ENCODE measurements at regions of chr11 and their contacts with region 1.

Region 1: GRCh38 chr11:43868852-43869567 is 11.6 kb upstream of the ALKBH3 start:
- DNase-seq: peak; percentile 54
- H3K4me3 Mint-ChIP-seq: no peak overlapping the region
- H3K27ac Mint-ChIP-seq: peak overlapping the region; percentile 15
- H3K4me1 Mint-ChIP-seq: peaks cover 16% of the 10 kb centered on the region
- H3K27me3 Mint-ChIP-seq: peaks cover 49% of the 10 kb centered on the region

Region 2: GRCh38 chr11:43643898-43644620 is 225.0 kb before region 1 on chr11:
- CTCF ChIA-PET with region 1: no interaction called
- POLR2A ChIA-PET with region 1: no interaction called
- intact Hi-C with region 1: loop called (anchors 1 kb)
- DNase-seq: peak; percentile 93
- H3K4me3 Mint-ChIP-seq: peak overlapping the region; percentile 97
- H3K27ac Mint-ChIP-seq: peak overlapping the region; percentile 75
- H3K4me1 Mint-ChIP-seq: peaks cover 24% of the 10 kb centered on the region
- H3K27me3 Mint-ChIP-seq: peaks cover 11% of the 10 kb centered on the region

Region 3: GRCh38 chr11:43830928-43831440 is 38.0 kb before region 1 on chr11:
- CTCF ChIA-PET with region 1: interaction called, 3 read pairs
- POLR2A ChIA-PET with region 1: interaction called, 6 read pairs
- intact Hi-C with region 1: loop called (anchors 1 kb)
- DNase-seq: peak; percentile 74
- H3K4me3 Mint-ChIP-seq: no peak overlapping the region
- H3K27ac Mint-ChIP-seq: peak overlapping the region; percentile 52
- H3K4me1 Mint-ChIP-seq: peaks cover 18% of the 10 kb centered on the region
- H3K27me3 Mint-ChIP-seq: no peaks in the 10 kb centered on the region

Region 4: DNA sequence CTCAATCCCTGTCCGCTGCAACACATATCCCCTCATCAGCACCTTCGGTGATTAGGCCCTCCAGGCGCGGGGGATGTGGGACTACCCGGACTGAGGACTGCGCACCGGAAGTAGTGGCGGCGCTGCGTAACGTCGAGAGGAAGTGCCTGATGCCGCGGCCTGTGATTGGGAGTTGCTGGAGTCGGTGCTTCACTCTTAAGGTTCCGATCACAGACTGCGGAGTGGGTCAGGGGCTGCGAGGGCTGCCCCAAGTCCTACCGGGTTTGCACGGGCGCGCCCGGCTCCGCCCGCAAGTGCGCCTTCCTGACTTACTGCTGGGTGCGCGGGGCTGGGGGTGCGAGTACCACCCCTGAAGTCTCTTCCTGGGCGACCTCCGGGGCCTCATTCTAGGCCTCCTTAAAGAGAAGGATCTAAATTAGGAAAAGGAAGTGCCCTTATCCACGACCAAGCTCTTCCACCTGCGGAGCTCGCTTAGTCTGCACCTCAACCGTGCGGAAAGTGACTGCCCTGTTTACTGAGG is 11.7 kb after region 1 on chr11 and contains the start of gene ALKBH3:
- CTCF ChIA-PET with region 1: no interaction called
- POLR2A ChIA-PET with region 1: interaction called, 5 read pairs
- intact Hi-C with region 1: loop called (anchors 1 kb)
- DNase-seq: peak; percentile 94
- H3K4me3 Mint-ChIP-seq: peak within 1 kb of the TSS; percentile 93
- H3K27ac Mint-ChIP-seq: peak within 1 kb of the TSS; percentile 72
- H3K4me1 Mint-ChIP-seq: peaks cover 23% of the 10 kb centered on the region
- H3K27me3 Mint-ChIP-seq: peaks cover 10% of the 10 kb centered on the region
- total RNA-seq, gene ALKBH3: 32.1 to 35.8 TPM

Region 5: DNA sequence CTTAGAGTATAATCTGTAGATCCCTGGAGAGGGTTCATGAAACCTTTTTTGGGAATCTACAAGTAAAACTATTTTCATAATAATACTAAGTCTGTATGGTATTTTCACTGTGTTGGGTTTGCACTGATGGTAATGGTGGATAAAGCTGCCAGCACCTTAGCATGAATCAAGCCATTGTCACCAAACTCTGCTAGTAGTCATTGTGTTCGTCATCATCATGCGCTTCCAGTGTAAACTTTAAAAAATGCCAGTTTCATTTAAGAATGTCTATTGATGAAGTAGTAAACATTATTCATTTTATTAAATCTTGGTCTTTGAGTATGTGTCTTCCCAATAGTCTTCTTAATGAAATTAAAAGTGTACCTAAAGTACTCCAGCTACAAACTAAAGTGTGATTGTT is 26.6 kb after region 1 on chr11:
- CTCF ChIA-PET with region 1: no interaction called
- POLR2A ChIA-PET with region 1: no interaction called
- intact Hi-C with region 1: no loop called
- DNase-seq: no peak
- H3K4me3 Mint-ChIP-seq: no peak overlapping the region
- H3K27ac Mint-ChIP-seq: no peak overlapping the region
- H3K4me1 Mint-ChIP-seq: no peaks in the 10 kb centered on the region
- H3K27me3 Mint-ChIP-seq: no peaks in the 10 kb centered on the region

Region 6: GRCh38 chr11:45147017-45147728 is 1278.2 kb after region 1 on chr11:
- CTCF ChIA-PET with region 1: no interaction called
- POLR2A ChIA-PET with region 1: no interaction called
- intact Hi-C with region 1: loop called (anchors 5 kb)
- DNase-seq: peak; percentile 95
- H3K4me3 Mint-ChIP-seq: peak overlapping the region; percentile 82
- H3K27ac Mint-ChIP-seq: peak overlapping the region; percentile 69
- H3K4me1 Mint-ChIP-seq: peaks cover 19% of the 10 kb centered on the region
- H3K27me3 Mint-ChIP-seq: peaks cover 8% of the 10 kb centered on the region

Measured in activated CD4-positive, alpha-beta memory T cell treated with anti-CD3 and anti-CD28 coated beads for 36 hours (primary cell).